Breast epithelium (tissue), 4 donors: ENCODE measurements at regions of chr5 and their contacts with region 1.

Region 1: GRCh38 chr5:145307866-145308382 is 527.2 kb downstream of the PRELID2 start:
- DNase-seq: no peak
- H3K4me3 ChIP-seq: no peak overlapping the region
- H3K27ac ChIP-seq: no peak overlapping the region
- H3K4me1 ChIP-seq: no peaks in the 10 kb centered on the region
- H3K27me3 ChIP-seq: no peaks in the 10 kb centered on the region
- CTCF ChIP-seq: no peak
- POLR2A ChIP-seq: no peak

Region 2: GRCh38 chr5:145101246-145101645 is 206.7 kb before region 1 on chr5:
- intact Hi-C with region 1: no loop called
- DNase-seq: no peak
- H3K4me3 ChIP-seq: no peak overlapping the region
- H3K27ac ChIP-seq: no peak overlapping the region
- H3K4me1 ChIP-seq: no peaks in the 10 kb centered on the region
- H3K27me3 ChIP-seq: no peaks in the 10 kb centered on the region
- CTCF ChIP-seq: no peak
- POLR2A ChIP-seq: no peak

Region 3: DNA sequence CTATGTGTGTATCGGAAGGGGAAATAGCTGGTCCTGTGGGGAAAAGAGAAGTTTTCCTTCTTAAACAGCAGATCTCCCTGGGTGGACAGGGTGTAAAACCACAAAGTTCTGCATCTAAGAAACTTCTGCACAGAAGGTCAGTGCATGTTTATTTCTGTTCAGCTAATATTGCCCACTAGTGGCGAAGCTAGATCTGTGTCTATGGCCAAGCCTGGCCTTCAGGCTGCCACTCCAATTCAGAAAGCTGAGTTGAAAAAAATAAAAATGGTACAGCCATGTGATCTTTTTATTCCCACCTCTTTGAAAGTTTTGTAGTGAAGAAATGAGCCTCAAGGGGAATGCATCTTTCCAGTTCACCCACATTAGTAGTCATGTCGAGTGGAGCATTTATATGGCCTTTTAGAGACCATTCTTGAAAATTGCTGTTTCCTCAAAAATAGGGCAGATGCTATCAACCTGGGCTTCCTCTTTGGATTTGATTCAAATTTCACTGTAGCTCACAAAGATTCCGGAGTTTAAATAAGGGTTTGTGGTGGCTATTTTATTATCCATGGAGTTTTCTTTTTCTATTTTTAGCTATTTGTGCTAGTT is 39.2 kb after region 1 on chr5:
- intact Hi-C with region 1: no loop called
- DNase-seq: no peak
- H3K4me3 ChIP-seq: no peak overlapping the region
- H3K27ac ChIP-seq: no peak overlapping the region
- H3K4me1 ChIP-seq: no peaks in the 10 kb centered on the region
- H3K27me3 ChIP-seq: no peaks in the 10 kb centered on the region
- CTCF ChIP-seq: peak in 2 of 3 donors; percentile 10 to 16
- POLR2A ChIP-seq: no peak

Region 4: GRCh38 chr5:145825751-145826180 is 517.8 kb after region 1 on chr5:
- intact Hi-C with region 1: loop called (anchors 10 kb)
- DNase-seq: no peak
- H3K4me3 ChIP-seq: no peak overlapping the region
- H3K27ac ChIP-seq: no peak overlapping the region
- H3K4me1 ChIP-seq: peaks cover 0 to 6% of the 10 kb centered on the region in 2 donors
- H3K27me3 ChIP-seq: no peaks in the 10 kb centered on the region
- CTCF ChIP-seq: peak; percentile 10 to 67 (median 62)
- POLR2A ChIP-seq: no peak